A549 (cell line): ENCODE measurements at regions of chr16 and their contacts with region 1.

Region 1: GRCh38 chr16:19555162-19555937 is at the start of gene VPS35L:
- DNase-seq: peak; percentile 98 to 99
- ATAC-seq: peak; percentile 97 to 99
- H3K4me3 ChIP-seq: peak within 1 kb of the TSS; percentile 89
- H3K27ac ChIP-seq: peak within 1 kb of the TSS; percentile 91 to 93
- H3K4me1 ChIP-seq: peaks cover 10% of the 10 kb centered on the region; the same call in 1 of the 3 replicates
- CTCF ChIP-seq: peak; percentile 78
- EP300 ChIP-seq: no peak
- POLR2A ChIP-seq: peak; percentile 70
- RAD21 ChIP-seq: peak; percentile 44 to 48
- polyA plus RNA-seq, gene VPS35L: 47.7 and 59.0 TPM in 2 replicates

Region 2: GRCh38 chr16:19450186-19450585 is 105.2 kb before region 1 on chr16:
- CTCF ChIA-PET with region 1: no interaction called
- POLR2A ChIA-PET with region 1: no interaction called
- DNase-seq: no peak
- ATAC-seq: no peak
- H3K4me3 ChIP-seq: no peak overlapping the region
- H3K27ac ChIP-seq: no peak overlapping the region
- H3K4me1 ChIP-seq: no peaks in the 10 kb centered on the region
- CTCF ChIP-seq: no peak
- EP300 ChIP-seq: no peak
- POLR2A ChIP-seq: no peak
- RAD21 ChIP-seq: no peak

Region 3: DNA sequence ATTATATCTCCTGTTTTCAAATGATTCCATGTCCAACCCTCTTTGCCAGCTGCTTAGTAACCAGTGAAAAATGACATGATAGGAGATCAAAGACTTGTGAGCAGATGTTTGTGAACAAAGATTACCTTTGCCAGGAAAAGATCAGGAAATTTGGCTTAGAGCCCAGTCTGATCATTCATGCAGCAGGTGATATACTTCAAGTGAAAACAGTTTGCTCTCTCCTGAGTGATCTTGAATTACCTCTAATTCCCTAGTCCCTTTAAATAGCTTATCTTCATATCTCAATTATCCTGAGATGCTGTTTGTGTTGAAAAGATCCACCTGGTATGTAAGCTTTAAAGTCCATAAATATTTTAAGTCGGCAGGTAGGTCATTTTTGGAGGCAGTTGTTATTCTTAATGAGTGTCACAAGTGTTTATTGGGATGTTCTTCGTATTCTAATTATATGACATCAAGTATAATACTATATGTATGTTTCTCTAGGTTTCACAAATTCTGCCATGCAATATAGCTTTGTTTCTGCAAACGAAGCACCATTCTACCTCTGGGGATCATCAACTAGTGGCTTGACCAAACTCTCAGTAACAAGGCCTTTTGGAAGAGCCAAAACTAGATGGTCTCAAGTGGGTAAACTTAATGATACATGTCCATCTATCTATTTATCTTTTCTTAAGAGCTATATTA is 13.1 kb before region 1 on chr16:
- CTCF ChIA-PET with region 1: interaction called, 19 read pairs
- POLR2A ChIA-PET with region 1: interaction called, 5 read pairs
- DNase-seq: no peak
- ATAC-seq: no peak
- H3K4me3 ChIP-seq: no peak overlapping the region
- H3K27ac ChIP-seq: no peak overlapping the region
- H3K4me1 ChIP-seq: no peaks in the 10 kb centered on the region
- CTCF ChIP-seq: no peak
- EP300 ChIP-seq: no peak
- POLR2A ChIP-seq: no peak
- RAD21 ChIP-seq: no peak

Region 4: DNA sequence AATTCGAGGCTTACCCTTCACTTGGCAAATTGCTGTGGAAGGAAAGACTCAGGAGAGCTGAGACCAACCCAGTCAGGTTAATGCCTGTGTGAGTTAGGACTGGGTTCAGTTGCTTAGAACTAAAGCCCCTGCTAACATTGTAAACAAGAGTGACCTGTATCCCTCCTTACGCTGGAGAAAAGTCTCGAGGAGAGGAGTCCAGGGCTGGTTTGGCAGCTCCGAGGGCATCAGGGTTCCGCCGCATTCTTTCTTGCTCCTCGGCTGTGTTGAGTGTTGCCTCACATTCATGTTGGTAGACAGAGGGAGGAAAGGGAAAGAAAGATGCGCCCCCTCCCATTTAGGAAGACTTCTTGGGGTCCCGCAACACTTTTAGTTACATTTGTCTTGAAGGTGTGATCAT is 18.6 kb after region 1 on chr16:
- CTCF ChIA-PET with region 1: interaction called, 18 read pairs
- POLR2A ChIA-PET with region 1: no interaction called
- DNase-seq: no peak
- ATAC-seq: no peak
- H3K4me3 ChIP-seq: no peak overlapping the region
- H3K27ac ChIP-seq: no peak overlapping the region
- H3K4me1 ChIP-seq: no peaks in the 10 kb centered on the region
- CTCF ChIP-seq: no peak
- EP300 ChIP-seq: no peak
- POLR2A ChIP-seq: no peak
- RAD21 ChIP-seq: no peak

Region 5: DNA sequence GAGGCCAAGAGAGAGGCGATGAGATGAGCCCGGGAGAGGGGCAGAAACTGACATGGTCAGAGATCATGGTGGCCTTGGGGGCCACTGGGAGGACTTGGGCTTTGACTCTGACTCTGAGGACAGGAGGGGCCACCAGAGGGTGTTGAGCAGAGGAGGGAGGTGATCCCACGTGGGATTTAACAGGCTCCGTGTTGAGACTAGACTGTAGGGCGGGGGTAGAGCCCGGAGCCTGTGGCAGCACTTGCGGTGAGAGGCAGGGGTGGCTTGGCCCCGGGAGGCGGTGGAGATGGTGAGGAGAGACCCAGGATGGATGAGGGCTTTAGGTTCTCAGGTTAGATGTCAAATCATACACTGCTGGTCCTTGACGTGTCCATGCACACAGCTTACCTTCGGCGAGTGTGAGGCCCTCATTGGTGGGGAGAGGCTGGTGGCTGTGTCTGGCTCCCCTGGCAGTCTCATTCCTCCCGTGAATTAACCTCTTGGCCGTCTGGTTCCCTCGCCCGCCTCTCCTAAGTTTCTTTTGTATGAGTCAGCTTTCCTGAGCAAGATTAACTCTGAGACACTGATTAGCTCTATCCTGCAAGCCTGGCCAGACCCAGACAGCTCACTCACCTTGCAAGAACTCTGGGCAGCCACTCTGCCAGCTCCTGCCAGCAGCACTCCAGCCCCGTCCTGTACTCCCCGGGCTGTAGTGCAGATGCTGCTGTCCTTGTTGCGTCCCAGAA is 39.9 kb after region 1 on chr16:
- CTCF ChIA-PET with region 1: interaction called, 26 read pairs
- POLR2A ChIA-PET with region 1: interaction called, 11 read pairs
- DNase-seq: peak; percentile 76 to 88
- ATAC-seq: peak; percentile 95 to 96
- H3K4me3 ChIP-seq: no peak overlapping the region
- H3K27ac ChIP-seq: peak overlapping the region; percentile 87 to 91
- H3K4me1 ChIP-seq: peaks cover 33% of the 10 kb centered on the region
- CTCF ChIP-seq: no peak
- EP300 ChIP-seq: no peak
- POLR2A ChIP-seq: no peak
- RAD21 ChIP-seq: no peak

Region 6: DNA sequence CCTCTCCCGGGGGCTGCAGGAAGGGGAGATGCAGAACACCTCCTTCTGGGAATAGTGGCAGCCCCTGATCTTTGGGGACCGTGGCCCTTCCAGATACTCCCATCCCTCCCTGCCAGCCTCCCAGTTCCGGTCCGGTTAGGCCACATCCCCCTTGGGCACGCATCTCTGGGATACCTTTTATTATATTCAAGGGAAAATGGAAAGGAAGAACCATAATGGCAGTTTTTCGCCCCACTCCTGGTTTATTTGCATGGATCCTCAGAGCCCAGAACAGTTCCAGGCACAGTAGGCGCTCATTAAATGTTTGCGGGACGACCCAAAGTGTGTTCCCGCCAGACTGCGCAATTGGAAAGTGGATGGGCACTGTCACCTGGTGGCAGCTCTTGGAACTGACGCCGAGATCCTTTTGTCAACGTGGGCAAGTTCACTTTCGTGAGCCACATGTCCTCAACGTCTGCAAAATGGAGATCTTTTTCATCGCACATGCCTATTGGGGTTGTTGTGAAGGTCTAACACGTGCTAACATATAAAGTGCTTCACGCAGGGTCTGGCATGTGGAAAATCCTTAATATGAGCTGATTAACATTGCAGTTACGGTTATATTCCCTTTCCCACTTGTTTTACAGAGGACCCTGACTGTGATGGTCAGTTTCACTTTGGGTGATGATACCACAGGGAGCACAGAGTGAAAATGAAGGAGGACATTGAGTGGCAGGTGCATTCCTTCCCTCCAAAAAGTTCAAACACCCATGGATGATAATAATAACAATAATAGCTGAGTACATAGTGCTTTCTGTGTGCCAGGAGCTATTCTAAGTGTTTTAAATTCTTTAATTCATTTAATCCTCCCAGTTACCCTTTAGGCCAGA is 331.0 kb after region 1 on chr16:
- CTCF ChIA-PET with region 1: interaction called, 16 read pairs
- POLR2A ChIA-PET with region 1: interaction called, 3 read pairs
- DNase-seq: peak; percentile 43 to 88
- ATAC-seq: peak; percentile 65 to 80
- H3K4me3 ChIP-seq: no peak overlapping the region
- H3K27ac ChIP-seq: peak overlapping the region; percentile 2 to 90; a peak in 4 of 6 replicates
- H3K4me1 ChIP-seq: peaks cover 11% of the 10 kb centered on the region; the same call in 2 of the 3 replicates
- CTCF ChIP-seq: peak; percentile 98
- EP300 ChIP-seq: no peak
- POLR2A ChIP-seq: no peak
- RAD21 ChIP-seq: peak; percentile 100

Region 7: GRCh38 chr16:19963301-19963700 is 408.0 kb after region 1 on chr16:
- CTCF ChIA-PET with region 1: no interaction called
- POLR2A ChIA-PET with region 1: no interaction called
- DNase-seq: no peak
- ATAC-seq: no peak
- H3K4me3 ChIP-seq: no peak overlapping the region
- H3K27ac ChIP-seq: no peak overlapping the region
- H3K4me1 ChIP-seq: no peaks in the 10 kb centered on the region
- CTCF ChIP-seq: no peak
- EP300 ChIP-seq: no peak
- POLR2A ChIP-seq: no peak
- RAD21 ChIP-seq: no peak